ENCODE measurements at regions of chr3 and their contacts with region 1.

Region 1: DNA sequence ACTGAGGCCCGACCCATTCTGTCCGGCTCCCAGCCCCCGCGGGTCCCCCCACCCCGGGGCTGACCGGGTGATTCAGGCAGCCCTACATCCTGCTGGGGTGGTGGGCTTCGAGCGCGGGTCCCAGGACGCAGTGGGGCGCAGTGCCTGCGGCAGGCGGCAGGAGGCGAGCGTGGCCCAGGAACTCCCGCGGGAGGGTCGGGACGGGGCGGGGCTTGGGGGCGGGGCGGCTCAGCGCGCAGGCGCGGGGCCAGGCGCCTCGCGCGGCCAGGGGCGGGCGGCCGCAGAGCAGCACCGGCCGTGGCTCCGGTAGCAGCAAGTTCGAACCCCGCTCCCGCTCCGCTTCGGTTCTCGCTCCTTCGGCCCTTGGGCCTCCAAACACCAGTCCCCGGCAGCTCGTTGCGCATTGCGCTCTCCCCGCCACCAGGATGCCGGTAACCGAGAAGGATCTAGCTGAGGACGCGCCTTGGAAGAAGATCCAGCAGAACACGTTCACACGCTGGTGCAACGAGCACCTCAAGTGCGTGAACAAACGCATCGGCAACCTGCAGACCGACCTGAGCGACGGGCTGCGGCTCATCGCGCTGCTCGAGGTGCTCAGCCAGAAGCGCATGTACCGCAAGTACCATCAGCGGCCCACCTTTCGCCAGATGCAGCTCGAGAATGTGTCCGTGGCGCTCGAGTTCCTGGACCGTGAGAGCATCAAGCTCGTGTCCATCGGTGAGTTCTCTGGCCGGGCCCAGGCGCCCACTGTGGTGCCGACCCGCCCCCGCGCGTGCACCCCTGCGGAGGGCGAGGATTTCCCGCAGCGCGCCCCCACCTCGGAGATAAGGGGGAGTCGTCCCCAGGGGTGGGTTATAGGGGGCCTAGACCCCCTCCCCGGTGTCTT is at the start of gene FLNB:
- DNase-seq: peak; percentile 78
- ATAC-seq: peak; percentile 88
- H3K4me3 Mint-ChIP-seq: peak within 1 kb of the TSS; percentile 91
- H3K27ac Mint-ChIP-seq: peak within 1 kb of the TSS; percentile 87
- H3K4me1 Mint-ChIP-seq: peaks cover 31% of the 10 kb centered on the region
- H3K27me3 Mint-ChIP-seq: no peaks in the 10 kb centered on the region
- CTCF ChIP-seq: peak; percentile 77
- total RNA-seq, gene FLNB: 26.3 to 28.4 TPM

Region 2: GRCh38 chr3:57778494-57778893 is 229.9 kb before region 1 on chr3:
- CTCF ChIA-PET with region 1: no interaction called
- POLR2A ChIA-PET with region 1: no interaction called
- intact Hi-C with region 1: no loop called
- DNase-seq: no peak
- ATAC-seq: no peak
- H3K4me3 Mint-ChIP-seq: no peak overlapping the region
- H3K27ac Mint-ChIP-seq: no peak overlapping the region
- H3K4me1 Mint-ChIP-seq: peaks cover 30% of the 10 kb centered on the region
- H3K27me3 Mint-ChIP-seq: no peaks in the 10 kb centered on the region
- CTCF ChIP-seq: no peak

Region 3: GRCh38 chr3:57961828-57962447 is 46.4 kb before region 1 on chr3:
- CTCF ChIA-PET with region 1: interaction called, 10 read pairs
- POLR2A ChIA-PET with region 1: no interaction called
- intact Hi-C with region 1: no loop called
- DNase-seq: no peak
- ATAC-seq: no peak
- H3K4me3 Mint-ChIP-seq: no peak overlapping the region
- H3K27ac Mint-ChIP-seq: no peak overlapping the region
- H3K4me1 Mint-ChIP-seq: peaks cover 3% of the 10 kb centered on the region
- H3K27me3 Mint-ChIP-seq: no peaks in the 10 kb centered on the region
- CTCF ChIP-seq: peak; percentile 44

Region 4: DNA sequence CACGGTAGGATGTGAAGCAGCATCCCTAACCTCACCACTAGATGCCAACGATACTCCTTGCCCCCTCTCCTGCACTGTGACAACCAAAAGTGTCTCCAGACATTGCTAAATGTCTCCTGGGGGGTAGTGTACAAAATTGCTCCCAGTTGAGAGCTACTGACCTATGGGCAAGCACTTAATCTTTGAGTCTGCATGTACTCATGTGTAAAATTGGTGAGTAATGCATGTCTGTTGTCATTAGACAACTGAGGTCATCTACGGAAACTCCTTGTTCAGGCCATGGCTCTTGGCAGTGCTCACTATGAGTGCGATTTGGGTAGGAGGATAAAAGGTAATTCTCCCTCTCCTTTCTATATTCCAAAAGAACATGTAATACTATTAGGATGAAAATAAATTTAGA is 396.0 kb after region 1 on chr3:
- CTCF ChIA-PET with region 1: no interaction called
- POLR2A ChIA-PET with region 1: no interaction called
- intact Hi-C with region 1: no loop called
- DNase-seq: no peak
- ATAC-seq: no peak
- H3K4me3 Mint-ChIP-seq: no peak overlapping the region
- H3K27ac Mint-ChIP-seq: no peak overlapping the region
- H3K4me1 Mint-ChIP-seq: no peaks in the 10 kb centered on the region
- H3K27me3 Mint-ChIP-seq: no peaks in the 10 kb centered on the region
- CTCF ChIP-seq: no peak

Measured in activated CD8-positive, alpha-beta T cell treated with anti-CD3 and anti-CD28 coated beads for 36 hours (primary cell).